ENCODE measurements at regions of chr9 and their contacts with region 1.

Region 1: DNA sequence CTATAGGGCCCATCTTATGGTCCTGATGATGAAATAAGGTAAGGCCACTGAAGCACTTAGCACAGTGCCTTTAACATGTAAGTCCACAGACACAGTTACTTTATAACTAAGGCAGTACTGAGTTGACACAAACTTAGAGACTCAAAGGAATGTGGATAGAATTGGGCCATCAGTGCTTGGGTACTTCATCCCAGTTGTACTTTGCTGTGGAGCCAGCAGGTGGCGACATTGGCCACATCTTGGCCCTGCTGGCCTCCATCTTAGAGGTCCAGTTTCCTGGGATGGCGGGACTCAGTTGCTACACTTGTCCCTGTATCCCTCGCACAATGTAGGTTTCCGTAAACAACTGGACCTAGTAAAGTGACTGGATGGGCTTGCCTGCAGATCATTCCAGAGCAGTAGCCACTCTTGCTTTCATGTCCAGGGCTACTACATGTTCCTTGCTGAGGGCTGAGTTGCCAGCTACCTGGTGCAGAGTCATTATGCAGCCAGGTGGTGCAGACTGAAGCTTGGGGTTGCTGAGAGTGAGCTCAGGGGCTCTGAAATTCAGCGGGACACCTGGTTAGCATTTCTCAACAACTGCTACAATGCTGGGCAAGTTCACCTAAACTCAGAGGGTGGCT is 10.6 kb downstream of the MTAP start:
- DNase-seq: peak; percentile 78
- ATAC-seq: peak; percentile 80
- H3K4me3 ChIP-seq: no peak overlapping the region
- H3K4me3 Mint-ChIP-seq: peak overlapping the region; percentile 19
- H3K27ac ChIP-seq: peak overlapping the region in 1 of 2 donors; percentile 10
- H3K27ac Mint-ChIP-seq: peak overlapping the region; percentile 11
- H3K4me1 ChIP-seq: peaks cover 9 to 11% of the 10 kb centered on the region in 2 donors
- H3K4me1 Mint-ChIP-seq: peaks cover 22% of the 10 kb centered on the region
- H3K27me3 ChIP-seq: no peaks in the 10 kb centered on the region
- H3K27me3 Mint-ChIP-seq: no peaks in the 10 kb centered on the region
- CTCF ChIP-seq: peak; percentile 85

Region 2: DNA sequence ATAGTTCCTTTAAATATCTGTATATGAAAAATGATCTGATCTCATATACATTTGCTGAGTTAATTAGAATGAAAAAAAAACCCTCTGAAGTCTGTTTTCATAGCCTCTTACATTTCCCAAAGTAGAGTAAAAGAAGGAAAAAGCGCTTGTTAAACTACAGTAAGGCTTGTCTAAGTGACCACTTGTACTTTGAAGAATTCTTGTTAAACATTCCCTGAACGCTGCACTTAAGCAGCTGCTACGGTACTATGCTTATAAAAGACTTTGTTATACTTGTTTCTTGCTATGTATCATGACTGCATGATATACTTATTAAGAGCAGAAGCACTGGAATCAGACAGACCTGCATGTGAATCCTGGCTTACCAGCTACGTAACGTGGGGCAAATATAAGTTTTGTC is 92.3 kb before region 1 on chr9:
- CTCF ChIA-PET with region 1: no interaction called
- POLR2A ChIA-PET with region 1: no interaction called
- intact Hi-C with region 1: no loop called
- DNase-seq: no peak
- ATAC-seq: no peak
- H3K4me3 ChIP-seq: no peak overlapping the region
- H3K4me3 Mint-ChIP-seq: no peak overlapping the region
- H3K27ac ChIP-seq: no peak overlapping the region
- H3K27ac Mint-ChIP-seq: no peak overlapping the region
- H3K4me1 ChIP-seq: no peaks in the 10 kb centered on the region
- H3K4me1 Mint-ChIP-seq: no peaks in the 10 kb centered on the region
- H3K27me3 ChIP-seq: peaks cover 0 to 4% (median 3%) of the 10 kb centered on the region in 4 experiments
- H3K27me3 Mint-ChIP-seq: peaks cover 40% of the 10 kb centered on the region
- CTCF ChIP-seq: no peak

Region 3: GRCh38 chr9:21741151-21741550 is 71.9 kb before region 1 on chr9:
- CTCF ChIA-PET with region 1: no interaction called
- POLR2A ChIA-PET with region 1: no interaction called
- intact Hi-C with region 1: no loop called
- DNase-seq: no peak
- ATAC-seq: no peak
- H3K4me3 ChIP-seq: no peak overlapping the region
- H3K4me3 Mint-ChIP-seq: no peak overlapping the region
- H3K27ac ChIP-seq: no peak overlapping the region
- H3K27ac Mint-ChIP-seq: no peak overlapping the region
- H3K4me1 ChIP-seq: no peaks in the 10 kb centered on the region
- H3K4me1 Mint-ChIP-seq: no peaks in the 10 kb centered on the region
- H3K27me3 ChIP-seq: peaks cover 0 to 4% (median 1%) of the 10 kb centered on the region in 4 experiments
- H3K27me3 Mint-ChIP-seq: peaks cover 29% of the 10 kb centered on the region
- CTCF ChIP-seq: no peak

Region 4: DNA sequence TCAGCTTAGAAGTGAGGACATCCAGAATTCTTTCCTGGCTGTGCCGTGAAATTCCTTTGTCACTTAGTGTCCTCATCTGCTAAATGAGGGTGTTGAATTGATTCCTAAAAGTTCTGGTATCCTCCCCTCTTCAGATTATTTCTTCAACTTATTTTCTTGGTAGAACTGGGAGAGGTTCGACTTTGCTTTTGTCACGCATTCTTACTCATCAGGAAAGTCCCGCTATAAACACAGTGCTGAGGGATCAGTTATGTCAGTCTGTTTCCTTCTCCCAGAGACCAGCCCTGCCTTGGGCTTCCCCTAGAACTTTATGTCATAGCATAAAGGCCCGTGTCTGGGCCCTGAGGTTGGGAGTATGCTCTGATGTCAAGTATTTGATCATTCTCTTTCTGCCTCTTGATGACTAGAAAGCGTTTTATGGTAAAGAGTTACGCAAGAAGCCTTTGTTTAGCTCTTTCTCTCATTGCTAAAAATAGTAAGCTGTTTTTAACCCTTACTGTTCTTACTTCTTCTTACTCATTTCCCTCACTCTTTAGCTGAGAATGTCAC is 19.0 kb after region 1 on chr9:
- CTCF ChIA-PET with region 1: interaction called, 9 read pairs
- POLR2A ChIA-PET with region 1: no interaction called
- intact Hi-C with region 1: loop called (anchors 2 kb)
- DNase-seq: peak; percentile 51
- ATAC-seq: peak; percentile 19
- H3K4me3 ChIP-seq: no peak overlapping the region
- H3K4me3 Mint-ChIP-seq: peak overlapping the region; percentile 33
- H3K27ac ChIP-seq: peak overlapping the region in 1 of 2 donors; percentile 75
- H3K27ac Mint-ChIP-seq: peak overlapping the region; percentile 78
- H3K4me1 ChIP-seq: peaks cover 28 to 29% of the 10 kb centered on the region in 2 donors
- H3K4me1 Mint-ChIP-seq: peaks cover 44% of the 10 kb centered on the region
- H3K27me3 ChIP-seq: no peaks in the 10 kb centered on the region
- H3K27me3 Mint-ChIP-seq: no peaks in the 10 kb centered on the region
- CTCF ChIP-seq: no peak

Region 5: DNA sequence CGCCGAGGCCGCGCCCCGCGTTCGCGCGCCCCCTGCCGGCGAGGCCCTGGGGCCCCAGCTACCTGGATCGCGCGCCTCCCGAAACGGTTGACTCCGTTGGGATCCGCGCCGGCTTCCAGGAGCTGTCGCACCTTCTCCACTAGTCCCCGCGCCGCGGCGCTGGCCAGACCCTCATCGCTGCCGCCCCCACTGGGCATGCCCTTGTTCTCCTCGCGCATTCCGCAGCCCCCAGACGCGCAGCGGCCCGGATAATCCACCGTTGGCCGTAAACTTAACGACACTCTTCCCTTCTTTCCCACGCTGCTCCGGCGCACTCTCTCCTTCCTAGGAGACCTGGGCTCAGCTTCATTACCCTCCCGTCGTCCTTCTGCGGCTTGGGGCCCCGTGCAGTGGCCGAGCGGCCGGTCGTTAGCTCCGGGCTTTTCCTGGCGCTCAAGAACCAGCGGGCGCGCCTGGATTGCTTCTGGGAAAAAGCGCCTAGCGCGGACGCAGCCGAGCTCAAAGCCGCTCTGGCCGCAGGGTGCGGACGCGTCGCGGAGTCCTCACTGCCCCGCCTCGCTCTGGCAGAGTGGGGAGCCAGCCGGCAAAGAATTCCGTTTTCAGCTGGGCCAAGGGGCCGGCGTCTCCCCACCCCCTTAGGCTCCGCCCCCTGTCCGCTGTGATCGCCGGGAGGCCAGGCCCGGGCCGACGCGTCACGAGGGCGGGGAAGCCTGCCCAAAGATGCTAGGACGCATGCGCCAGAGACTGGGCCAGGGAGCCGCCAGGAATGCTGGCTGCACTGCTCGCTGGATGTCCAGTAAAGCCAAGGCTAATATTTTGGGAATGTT is 195.9 kb after region 1 on chr9 and contains the start of gene CDKN2B:
- CTCF ChIA-PET with region 1: interaction called, 105 read pairs
- POLR2A ChIA-PET with region 1: no interaction called
- intact Hi-C with region 1: loop called (anchors 1 kb)
- DNase-seq: peak; percentile 83
- ATAC-seq: peak; percentile 89
- H3K4me3 ChIP-seq: peak within 1 kb of the TSS; percentile 34 to 78 (median 69)
- H3K4me3 Mint-ChIP-seq: peak within 1 kb of the TSS; percentile 86
- H3K27ac ChIP-seq: peak within 1 kb of the TSS in 1 of 2 donors; percentile 9
- H3K27ac Mint-ChIP-seq: peak within 1 kb of the TSS; percentile 41
- H3K4me1 ChIP-seq: peaks cover 30 to 41% of the 10 kb centered on the region in 2 donors
- H3K4me1 Mint-ChIP-seq: peaks cover 34% of the 10 kb centered on the region
- H3K27me3 ChIP-seq: peaks cover 0 to 53% (median 45%) of the 10 kb centered on the region in 4 experiments
- H3K27me3 Mint-ChIP-seq: peaks cover 36% of the 10 kb centered on the region
- CTCF ChIP-seq: peak; percentile 98
- total RNA-seq, gene CDKN2B: 0.42 and 1.3 TPM in 2 replicates

Region 6: DNA sequence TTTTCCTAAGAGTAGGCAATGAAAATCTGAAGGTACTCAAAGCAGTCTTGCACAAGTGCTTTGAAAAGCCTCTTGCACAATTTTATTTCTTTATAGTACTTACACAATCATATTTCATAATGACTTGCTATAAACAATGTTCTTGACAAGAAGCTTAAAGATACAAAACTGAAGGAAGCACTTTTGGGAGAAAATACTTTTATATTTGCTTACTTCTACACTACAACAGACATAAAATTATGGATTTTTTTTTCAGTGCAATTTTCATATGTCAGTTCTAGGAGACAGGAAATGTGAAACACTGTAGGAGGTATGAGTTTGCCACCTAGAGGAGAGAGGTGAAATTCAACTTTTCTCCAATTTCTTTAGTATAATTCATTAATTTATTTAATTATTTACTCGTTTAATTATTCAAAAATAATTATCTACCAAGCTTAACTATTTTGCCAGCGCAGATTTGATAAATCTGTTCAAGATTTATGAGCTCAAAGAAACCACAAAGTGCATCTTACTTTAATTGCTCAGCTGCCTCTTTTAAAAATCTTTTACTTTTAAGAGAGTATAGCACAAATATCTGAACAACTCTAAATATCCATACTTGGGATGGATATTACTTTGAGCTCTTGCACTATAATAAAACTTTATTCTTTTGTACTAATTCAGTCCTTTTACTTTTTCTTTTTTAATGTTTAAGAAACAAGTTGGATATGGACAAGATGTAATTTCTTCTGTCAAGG is 225.1 kb after region 1 on chr9:
- CTCF ChIA-PET with region 1: interaction called, 217 read pairs
- POLR2A ChIA-PET with region 1: no interaction called
- intact Hi-C with region 1: loop called (anchors 1 kb)
- DNase-seq: peak; percentile 25
- ATAC-seq: no peak
- H3K4me3 ChIP-seq: no peak overlapping the region
- H3K4me3 Mint-ChIP-seq: no peak overlapping the region
- H3K27ac ChIP-seq: no peak overlapping the region
- H3K27ac Mint-ChIP-seq: no peak overlapping the region
- H3K4me1 ChIP-seq: no peaks in the 10 kb centered on the region
- H3K4me1 Mint-ChIP-seq: no peaks in the 10 kb centered on the region
- H3K27me3 ChIP-seq: no peaks in the 10 kb centered on the region
- H3K27me3 Mint-ChIP-seq: no peaks in the 10 kb centered on the region
- CTCF ChIP-seq: peak; percentile 77

Region 7: DNA sequence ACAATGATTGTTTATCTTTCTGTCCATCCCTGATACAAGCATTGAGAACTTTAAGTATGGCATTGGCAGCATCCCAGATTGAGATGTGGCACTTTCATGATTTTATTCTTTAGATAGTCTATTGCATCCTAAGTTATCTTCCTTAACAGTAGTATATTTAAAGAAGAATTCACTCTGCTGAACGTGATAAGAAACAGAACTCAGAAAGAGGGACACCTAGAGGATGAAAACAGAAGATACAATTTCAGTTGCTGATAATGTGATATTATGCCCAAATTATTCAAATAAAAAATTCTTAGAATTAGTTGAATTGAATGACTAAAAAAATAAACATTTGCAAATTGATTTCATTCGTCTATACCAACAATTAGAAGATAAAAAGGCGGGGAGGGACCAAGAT is 415.5 kb after region 1 on chr9:
- CTCF ChIA-PET with region 1: interaction called, 12 read pairs
- POLR2A ChIA-PET with region 1: no interaction called
- intact Hi-C with region 1: no loop called
- DNase-seq: no peak
- ATAC-seq: no peak
- H3K4me3 ChIP-seq: no peak overlapping the region
- H3K4me3 Mint-ChIP-seq: no peak overlapping the region
- H3K27ac ChIP-seq: no peak overlapping the region
- H3K27ac Mint-ChIP-seq: no peak overlapping the region
- H3K4me1 ChIP-seq: peaks cover 3% of the 10 kb centered on the region in 2 donors
- H3K4me1 Mint-ChIP-seq: peaks cover 3% of the 10 kb centered on the region
- H3K27me3 ChIP-seq: peaks cover 0 to 4% (median 0%) of the 10 kb centered on the region in 4 experiments
- H3K27me3 Mint-ChIP-seq: peaks cover 15% of the 10 kb centered on the region
- CTCF ChIP-seq: peak; percentile 21

Region 8: DNA sequence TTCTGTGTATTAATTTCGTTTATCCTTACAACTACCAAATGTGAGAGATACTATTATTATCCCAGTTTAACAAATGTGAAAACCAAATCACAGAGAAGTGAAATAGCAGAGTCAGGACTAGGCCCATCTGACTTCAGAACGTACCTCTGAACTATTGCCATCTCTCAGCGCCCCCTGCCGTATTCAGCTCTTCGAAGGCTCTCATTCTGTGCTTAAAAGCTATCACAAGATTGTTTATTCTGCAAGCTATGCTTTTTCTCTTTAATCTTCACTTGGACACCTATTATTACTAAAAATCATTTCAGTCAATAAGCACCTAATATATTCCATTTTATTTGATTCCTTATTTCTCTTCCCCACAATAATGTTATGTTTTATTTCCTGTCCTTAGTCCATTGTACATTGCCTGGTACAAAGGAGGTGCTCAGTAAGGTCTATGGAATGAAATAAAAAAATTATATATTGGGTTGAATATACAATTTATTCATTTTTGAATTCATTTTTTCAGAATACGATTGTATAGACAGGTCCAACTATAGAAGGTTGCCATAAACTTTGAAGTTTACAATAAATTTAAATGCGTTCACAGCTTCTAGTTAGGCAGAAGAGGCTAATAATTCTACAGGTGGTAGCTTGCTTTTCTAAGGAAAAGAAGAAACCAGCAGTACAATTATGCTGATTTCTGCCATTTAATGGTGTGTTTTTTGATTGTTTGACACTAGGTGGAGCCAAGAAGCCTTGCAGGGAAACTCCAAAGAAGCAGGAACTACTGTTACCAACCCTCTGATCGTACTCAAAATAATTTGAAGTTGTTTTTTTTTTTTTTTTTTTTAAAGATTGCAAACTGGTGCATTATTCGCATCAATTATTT is 431.3 kb after region 1 on chr9:
- CTCF ChIA-PET with region 1: interaction called, 174 read pairs
- POLR2A ChIA-PET with region 1: no interaction called
- intact Hi-C with region 1: loop called (anchors 1 kb)
- DNase-seq: peak; percentile 67
- ATAC-seq: peak; percentile 56
- H3K4me3 ChIP-seq: peak overlapping the region in 2 of 5 experiments; percentile 7 to 30
- H3K4me3 Mint-ChIP-seq: peak overlapping the region; percentile 35
- H3K27ac ChIP-seq: no peak overlapping the region
- H3K27ac Mint-ChIP-seq: no peak overlapping the region
- H3K4me1 ChIP-seq: peaks cover 28 to 29% of the 10 kb centered on the region in 2 donors
- H3K4me1 Mint-ChIP-seq: peaks cover 36% of the 10 kb centered on the region
- H3K27me3 ChIP-seq: no peaks in the 10 kb centered on the region
- H3K27me3 Mint-ChIP-seq: peaks cover 13% of the 10 kb centered on the region
- CTCF ChIP-seq: peak; percentile 79

Region 9: GRCh38 chr9:22452415-22453010 is 639.5 kb after region 1 on chr9:
- CTCF ChIA-PET with region 1: interaction called, 168 read pairs
- POLR2A ChIA-PET with region 1: no interaction called
- intact Hi-C with region 1: loop called (anchors 1 kb)
- DNase-seq: peak; percentile 64
- ATAC-seq: no peak
- H3K4me3 ChIP-seq: no peak overlapping the region
- H3K4me3 Mint-ChIP-seq: no peak overlapping the region
- H3K27ac ChIP-seq: no peak overlapping the region
- H3K27ac Mint-ChIP-seq: no peak overlapping the region
- H3K4me1 ChIP-seq: peaks cover 3 to 6% of the 10 kb centered on the region in 2 donors
- H3K4me1 Mint-ChIP-seq: peaks cover 6% of the 10 kb centered on the region
- H3K27me3 ChIP-seq: peaks cover 0 to 33% (median 12%) of the 10 kb centered on the region in 4 experiments
- H3K27me3 Mint-ChIP-seq: peaks cover 62% of the 10 kb centered on the region
- CTCF ChIP-seq: peak; percentile 95

Measured in B cell (primary cell).